HCT116 (cell line): ENCODE measurements at regions of chr2 and their contacts with region 1.

Region 1: DNA sequence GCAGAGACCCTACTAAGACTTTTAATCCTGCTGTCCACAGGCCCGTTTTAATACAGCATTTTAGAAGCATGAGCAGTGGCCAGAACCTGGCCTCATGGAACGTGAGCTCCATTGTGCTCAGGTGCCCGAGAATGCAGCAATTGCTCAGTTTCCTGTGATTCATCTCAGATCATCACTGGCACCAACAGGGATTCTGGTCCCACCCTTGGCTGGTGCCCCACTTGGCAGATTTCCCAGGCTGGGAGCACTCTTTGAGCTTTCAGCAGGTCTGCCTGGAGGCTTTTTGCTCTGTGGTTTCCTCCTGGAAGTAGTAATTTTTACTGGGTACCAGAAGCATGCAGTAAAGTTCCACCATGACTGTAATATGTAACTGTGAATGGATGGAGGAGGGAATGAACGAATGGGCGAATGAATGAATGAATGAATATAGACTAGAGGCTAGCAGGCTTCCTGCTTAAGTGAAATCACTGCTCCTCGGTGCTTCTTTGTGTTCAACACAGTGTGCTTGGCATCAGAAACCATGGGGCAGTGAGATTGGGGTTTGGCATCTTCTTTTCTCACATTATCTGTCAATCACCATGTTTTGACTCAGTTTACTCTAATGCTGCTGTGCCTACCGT is 312.9 kb downstream of the PRKCE start:
- DNase-seq: peak; percentile 97
- ATAC-seq: peak; percentile 79
- H3K4me3 ChIP-seq: peak overlapping the region in 1 of 2 experiments; percentile 33; a peak in 2 of 4 replicates
- H3K27ac ChIP-seq: peak overlapping the region; percentile 90
- H3K4me1 ChIP-seq: peaks cover 61 to 90% of the 10 kb centered on the region in 2 experiments
- H3K27me3 ChIP-seq: no peaks in the 10 kb centered on the region
- CTCF ChIP-seq: no peak
- POLR2A ChIP-seq: no peak
- RAD21 ChIP-seq: peak; percentile 50

Region 2: DNA sequence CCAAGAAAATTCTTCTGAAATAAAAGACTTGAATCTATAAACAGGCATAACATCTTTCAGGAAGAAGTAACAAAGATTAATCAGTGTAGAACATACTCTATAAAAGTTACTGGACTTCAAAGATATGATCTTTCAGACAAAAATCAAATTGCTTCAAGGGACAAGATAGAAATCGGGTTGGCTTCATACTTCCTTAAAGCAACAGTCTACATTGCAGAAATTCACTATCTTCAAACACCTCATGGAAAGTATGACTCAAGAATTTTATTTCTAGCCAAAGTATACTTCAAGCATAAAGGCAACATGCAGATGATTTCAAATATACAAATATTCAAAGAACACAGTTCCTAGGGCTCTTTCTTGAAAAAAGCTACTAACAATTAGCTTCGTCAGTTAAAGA is 594.0 kb before region 1 on chr2:
- CTCF ChIA-PET with region 1: no interaction called
- POLR2A ChIA-PET with region 1: no interaction called
- RAD21 ChIA-PET with region 1: no interaction called
- intact Hi-C with region 1: no loop called
- DNase-seq: no peak
- ATAC-seq: no peak
- H3K4me3 ChIP-seq: no peak overlapping the region
- H3K27ac ChIP-seq: no peak overlapping the region
- H3K4me1 ChIP-seq: peaks cover 0 to 7% of the 10 kb centered on the region in 2 experiments; a peak in 1 of 4 replicates
- H3K27me3 ChIP-seq: no peaks in the 10 kb centered on the region
- CTCF ChIP-seq: no peak
- POLR2A ChIP-seq: no peak
- RAD21 ChIP-seq: no peak

Region 3: GRCh38 chr2:45598545-45598944 is 365.8 kb before region 1 on chr2:
- CTCF ChIA-PET with region 1: no interaction called
- POLR2A ChIA-PET with region 1: no interaction called
- RAD21 ChIA-PET with region 1: no interaction called
- intact Hi-C with region 1: no loop called
- DNase-seq: no peak
- ATAC-seq: no peak
- H3K4me3 ChIP-seq: no peak overlapping the region
- H3K27ac ChIP-seq: no peak overlapping the region
- H3K4me1 ChIP-seq: no peaks in the 10 kb centered on the region
- H3K27me3 ChIP-seq: no peaks in the 10 kb centered on the region
- CTCF ChIP-seq: no peak
- POLR2A ChIP-seq: no peak
- RAD21 ChIP-seq: no peak

Region 4: DNA sequence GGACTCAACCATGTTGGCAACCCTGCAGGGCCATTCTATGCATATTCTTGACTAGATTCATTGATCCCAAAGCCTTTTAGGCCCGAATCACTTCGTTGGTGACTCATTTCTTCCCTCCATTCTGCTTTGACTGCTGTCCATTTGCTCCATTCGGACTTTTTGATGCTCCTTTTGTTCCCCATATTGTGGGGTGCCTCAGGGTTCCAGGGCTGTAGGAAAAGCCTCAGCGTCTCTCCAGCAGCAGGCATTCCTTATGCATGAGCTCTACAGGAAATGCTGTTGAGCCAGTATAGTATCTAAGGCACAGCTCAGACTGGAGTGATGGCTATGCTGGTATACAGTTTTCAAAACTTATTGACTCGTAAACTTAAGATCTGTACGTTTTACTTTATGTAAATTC is 20.3 kb before region 1 on chr2:
- CTCF ChIA-PET with region 1: interaction called, 11 read pairs
- POLR2A ChIA-PET with region 1: interaction called, 13 read pairs
- RAD21 ChIA-PET with region 1: no interaction called
- intact Hi-C with region 1: no loop called
- DNase-seq: peak; percentile 80
- ATAC-seq: peak; percentile 74
- H3K4me3 ChIP-seq: peak overlapping the region in 1 of 2 experiments; percentile 34; a peak in 2 of 4 replicates
- H3K27ac ChIP-seq: peak overlapping the region; percentile 73
- H3K4me1 ChIP-seq: peaks cover 62 to 77% of the 10 kb centered on the region in 2 experiments
- H3K27me3 ChIP-seq: no peaks in the 10 kb centered on the region
- CTCF ChIP-seq: no peak
- POLR2A ChIP-seq: no peak
- RAD21 ChIP-seq: 0 out of 2 replicates have a peak, but pooled peaks have one; percentile 7